Motor neuron (in vitro differentiated cells): ENCODE measurements at regions of chr10 and their contacts with region 1.

Region 1: DNA sequence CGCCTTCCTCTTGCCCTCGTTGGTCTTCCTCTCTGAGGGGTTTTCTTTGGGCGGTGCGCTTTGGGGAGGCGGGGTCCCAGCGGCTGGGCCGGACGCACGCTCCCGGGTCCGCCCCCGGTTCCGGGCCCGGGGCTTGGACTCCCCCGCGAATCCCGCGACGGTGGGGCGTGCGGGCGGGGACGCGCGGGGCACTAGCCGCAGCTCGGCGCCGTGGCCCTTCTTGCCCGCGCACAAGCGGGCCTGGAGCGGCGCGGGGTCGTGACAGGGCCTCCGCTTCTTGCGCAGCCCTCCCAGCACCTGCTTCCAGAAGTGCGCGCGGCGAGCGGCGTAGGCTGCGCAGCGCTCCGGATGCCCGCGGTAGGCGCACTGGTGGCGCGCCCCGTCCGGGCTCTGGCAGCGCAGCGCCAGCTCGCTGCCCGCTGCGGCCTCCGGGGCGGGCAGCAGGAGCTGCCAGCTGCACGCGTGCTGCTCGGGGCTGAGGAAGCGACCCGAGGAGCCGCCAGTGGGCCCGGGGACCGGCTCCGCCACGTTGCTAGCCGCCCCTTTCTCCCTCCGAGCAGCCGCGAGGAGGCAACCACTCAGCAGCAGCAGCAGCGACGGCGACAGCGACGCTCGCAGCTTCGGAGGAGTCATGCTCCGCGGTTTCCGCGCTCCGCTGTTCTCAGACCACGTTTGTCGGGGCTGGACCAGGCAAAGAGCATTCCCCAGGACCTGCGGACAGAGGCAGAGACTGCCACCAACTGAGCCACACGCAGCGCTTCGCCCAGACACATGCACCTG is 759 bp downstream of the FGFBP3 start:
- ATAC-seq: peak; percentile 89 to 93 (median 93)
- H3K4me3 ChIP-seq: peak overlapping the region; percentile 67 to 98 (median 79)
- H3K27ac ChIP-seq: peak overlapping the region; percentile 78 to 83
- H3K4me1 ChIP-seq: no peaks in the 10 kb centered on the region

Region 2: DNA sequence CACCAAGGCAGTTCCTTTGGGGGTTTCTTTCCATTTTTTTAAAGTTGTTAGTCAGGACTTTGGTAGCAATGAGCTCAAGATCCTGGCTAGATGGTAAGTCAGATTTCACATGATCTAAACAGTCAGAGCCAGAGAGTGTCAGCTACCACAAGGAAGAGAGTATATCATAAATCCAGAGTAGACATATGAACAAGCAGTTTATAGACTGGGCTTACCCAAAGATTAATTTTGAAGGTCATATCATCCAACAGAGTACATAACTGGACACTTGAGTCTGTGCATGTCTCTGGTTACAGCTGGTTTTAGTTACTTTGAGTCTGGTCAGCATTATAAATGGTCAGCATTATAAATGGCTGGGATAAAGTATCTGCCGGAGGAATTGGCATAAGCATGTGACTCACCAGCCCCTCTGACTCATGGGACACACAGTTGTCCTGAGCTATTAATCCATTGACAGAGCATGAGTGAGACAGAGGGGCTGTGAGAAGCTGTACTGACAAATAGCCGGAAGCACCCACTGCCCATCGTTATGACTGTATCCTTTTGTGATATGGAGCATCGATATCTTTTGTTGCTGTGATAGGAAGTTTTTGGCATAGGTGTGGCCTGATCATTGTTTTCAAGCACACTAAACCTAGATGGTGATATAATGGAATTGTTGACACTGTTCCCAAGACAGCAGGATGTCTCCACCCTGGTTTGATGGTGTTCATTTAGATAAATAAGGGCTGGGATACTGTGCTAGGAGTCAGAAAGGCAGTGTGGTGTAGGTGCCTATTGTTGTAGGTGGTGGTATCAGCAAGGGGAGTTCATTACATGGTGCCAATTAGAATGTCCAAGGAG is 294.9 kb before region 1 on chr10:
- in situ Hi-C with region 1: no loop called
- ATAC-seq: peak; percentile 33 to 93 (median 90)
- H3K4me3 ChIP-seq: no peak overlapping the region
- H3K27ac ChIP-seq: peak overlapping the region in 1 of 2 donors; percentile 12
- H3K4me1 ChIP-seq: peaks cover 6 to 8% of the 10 kb centered on the region in 2 donors

Region 3: DNA sequence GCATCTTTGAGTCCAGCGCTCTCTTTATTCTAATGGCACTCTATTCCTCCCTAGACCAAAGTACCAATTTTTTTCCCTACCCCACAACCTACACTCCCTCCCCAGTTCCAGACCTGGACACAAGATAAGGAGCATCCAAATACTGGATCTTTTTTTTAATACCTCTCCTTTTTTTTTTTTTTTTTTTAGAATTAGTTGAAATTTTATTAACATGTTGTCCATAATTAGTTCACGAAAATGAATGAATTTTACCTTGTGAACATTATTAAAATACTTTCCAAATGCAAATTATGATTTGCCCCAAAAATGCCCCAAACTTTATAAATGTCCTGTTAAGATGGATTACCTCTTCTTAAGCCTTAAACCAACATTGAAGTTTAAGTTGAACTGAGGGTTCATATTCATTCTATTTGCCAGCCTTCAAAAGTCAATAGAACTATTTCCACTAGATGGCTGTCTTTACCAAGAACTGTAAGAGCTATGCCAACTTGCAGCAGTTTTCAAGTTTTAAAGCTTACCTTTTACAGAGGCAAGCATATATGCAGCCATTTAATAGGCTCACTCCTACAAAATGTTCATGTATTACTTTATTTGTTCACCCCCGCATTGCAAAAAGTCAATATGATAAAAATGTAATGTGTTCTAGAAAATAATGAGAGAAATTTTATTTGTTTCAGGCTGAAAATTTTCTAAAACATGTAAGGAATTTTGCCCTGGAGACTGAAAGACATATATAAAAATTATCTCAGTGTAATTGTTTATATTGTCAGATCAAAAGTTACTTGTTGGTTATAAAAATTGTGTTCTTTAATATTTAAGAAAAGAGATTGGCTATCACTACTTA is 150.0 kb before region 1 on chr10:
- in situ Hi-C with region 1: loop called in 1 of 9 experiments (anchors 10 kb)
- ATAC-seq: peak in 5 of 8 experiments; percentile 53 to 78 (median 59)
- H3K4me3 ChIP-seq: no peak overlapping the region
- H3K27ac ChIP-seq: no peak overlapping the region
- H3K4me1 ChIP-seq: no peaks in the 10 kb centered on the region